ENCODE measurements at regions of chr4 and their contacts with region 1.

Region 1: GRCh38 chr4:15805583-15806517 is 27.7 kb downstream of the CD38 start:
- DNase-seq: no peak
- H3K4me3 ChIP-seq: no peak overlapping the region
- H3K27ac ChIP-seq: no peak overlapping the region
- H3K4me1 ChIP-seq: peaks cover 5% of the 10 kb centered on the region
- H3K27me3 ChIP-seq: no peaks in the 10 kb centered on the region
- CTCF ChIP-seq: peak; percentile 78

Region 2: GRCh38 chr4:15562114-15562513 is 243.7 kb before region 1 on chr4:
- intact Hi-C with region 1: no loop called
- DNase-seq: no peak
- H3K4me3 ChIP-seq: no peak overlapping the region
- H3K27ac ChIP-seq: no peak overlapping the region
- H3K4me1 ChIP-seq: no peaks in the 10 kb centered on the region
- H3K27me3 ChIP-seq: no peaks in the 10 kb centered on the region
- CTCF ChIP-seq: no peak

Region 3: GRCh38 chr4:15882675-15883086 is 76.8 kb after region 1 on chr4:
- intact Hi-C with region 1: loop called (anchors 5 kb)
- DNase-seq: no peak
- H3K4me3 ChIP-seq: no peak overlapping the region
- H3K27ac ChIP-seq: no peak overlapping the region
- H3K4me1 ChIP-seq: no peaks in the 10 kb centered on the region
- H3K27me3 ChIP-seq: no peaks in the 10 kb centered on the region
- CTCF ChIP-seq: peak; percentile 94

Region 4: DNA sequence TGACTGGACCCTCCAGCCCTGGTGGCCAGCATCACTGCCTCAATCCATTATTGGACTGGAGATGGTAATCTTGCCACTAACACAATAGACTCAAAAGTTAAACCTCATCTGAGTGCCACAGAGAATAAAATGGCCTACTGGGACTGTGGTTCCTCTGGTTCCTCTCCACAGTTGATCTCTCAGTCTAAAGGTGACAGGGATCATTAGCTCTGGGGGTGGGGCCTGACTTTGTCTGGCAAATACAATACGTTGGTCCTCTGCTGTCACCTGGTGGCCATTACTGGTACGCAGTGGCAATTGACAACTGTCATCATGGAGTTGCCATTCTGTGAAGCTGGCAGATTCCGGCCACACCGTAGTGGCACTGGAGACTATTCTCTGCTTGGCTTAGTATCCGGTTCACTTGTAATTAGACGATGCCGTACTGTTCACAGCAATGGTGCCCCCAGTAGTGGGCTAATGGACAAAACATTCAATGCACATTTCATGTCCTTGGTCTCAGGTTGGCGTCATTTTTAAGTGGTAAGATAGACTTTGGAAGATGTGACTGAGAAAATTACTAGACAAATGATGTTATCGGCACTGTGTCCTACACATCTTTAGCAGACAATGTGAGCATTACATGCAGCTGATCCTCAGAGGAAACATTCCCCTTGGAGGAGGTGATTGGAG is 150.5 kb after region 1 on chr4:
- intact Hi-C with region 1: loop called (anchors 10 kb)
- DNase-seq: peak; percentile 66
- H3K4me3 ChIP-seq: no peak overlapping the region
- H3K27ac ChIP-seq: no peak overlapping the region
- H3K4me1 ChIP-seq: no peaks in the 10 kb centered on the region
- H3K27me3 ChIP-seq: peaks cover 7% of the 10 kb centered on the region
- CTCF ChIP-seq: peak; percentile 89

Region 5: GRCh38 chr4:16001484-16001858 is 195.6 kb after region 1 on chr4:
- intact Hi-C with region 1: loop called (anchors 10 kb)
- DNase-seq: peak; percentile 33
- H3K4me3 ChIP-seq: no peak overlapping the region
- H3K27ac ChIP-seq: no peak overlapping the region
- H3K4me1 ChIP-seq: peaks cover 12% of the 10 kb centered on the region
- H3K27me3 ChIP-seq: no peaks in the 10 kb centered on the region
- CTCF ChIP-seq: peak; percentile 90

Measured in left ventricle myocardium inferior (tissue), 1 donor.